ENCODE measurements at regions of chr12 and their contacts with region 1.

Region 1: DNA sequence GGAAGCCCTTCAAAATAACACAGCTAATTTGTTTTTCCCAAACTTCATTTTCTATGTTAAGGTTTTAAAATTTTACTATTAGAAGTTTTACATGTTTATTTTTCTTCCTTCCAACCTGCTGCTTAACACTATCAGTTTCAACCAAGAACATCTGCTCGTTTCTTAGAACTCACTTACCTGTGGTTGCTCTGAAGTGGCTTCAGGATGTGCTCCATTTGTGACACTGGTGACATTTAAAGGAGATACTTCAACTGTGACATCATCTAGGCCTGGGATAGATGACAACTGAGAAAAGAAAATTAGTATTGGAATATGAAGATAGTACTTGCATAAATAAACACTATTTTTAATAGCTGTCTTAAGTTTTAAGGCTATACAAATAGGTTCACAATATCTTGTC is 17.9 kb downstream of the WASHC3 start:
- DNase-seq: no peak
- ATAC-seq: no peak
- H3K4me3 Mint-ChIP-seq: no peak overlapping the region
- H3K27ac Mint-ChIP-seq: no peak overlapping the region
- H3K4me1 Mint-ChIP-seq: peaks cover 3% of the 10 kb centered on the region
- H3K27me3 Mint-ChIP-seq: no peaks in the 10 kb centered on the region
- CTCF ChIP-seq: no peak

Region 2: GRCh38 chr12:101877816-101878242 is 166.1 kb before region 1 on chr12:
- CTCF ChIA-PET with region 1: no interaction called
- POLR2A ChIA-PET with region 1: no interaction called
- intact Hi-C with region 1: no loop called
- DNase-seq: no peak
- ATAC-seq: peak; percentile 10
- H3K4me3 Mint-ChIP-seq: peak overlapping the region; percentile 90
- H3K27ac Mint-ChIP-seq: peak overlapping the region; percentile 65
- H3K4me1 Mint-ChIP-seq: peaks cover 19% of the 10 kb centered on the region
- H3K27me3 Mint-ChIP-seq: no peaks in the 10 kb centered on the region
- CTCF ChIP-seq: no peak

Region 3: DNA sequence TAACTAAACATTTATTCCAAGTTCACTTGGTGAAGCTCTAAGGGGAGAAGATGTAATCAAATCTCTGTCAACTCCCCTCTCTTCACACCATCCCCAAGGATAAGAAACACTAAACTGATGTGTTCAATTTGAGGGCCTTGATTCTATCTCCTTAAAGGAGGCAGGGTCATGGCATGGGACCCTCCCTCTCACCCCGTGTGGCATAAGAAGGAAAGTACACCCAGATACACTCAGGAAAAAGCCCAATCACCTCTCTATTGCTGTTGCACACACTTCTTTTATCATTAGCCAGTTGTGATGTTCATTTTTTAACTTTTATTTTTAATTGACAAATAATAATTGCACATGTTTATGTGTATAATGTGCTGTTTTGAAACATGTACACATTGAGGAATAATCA is 17.2 kb before region 1 on chr12:
- CTCF ChIA-PET with region 1: no interaction called
- POLR2A ChIA-PET with region 1: no interaction called
- intact Hi-C with region 1: loop called (anchors 2 kb)
- DNase-seq: no peak
- ATAC-seq: no peak
- H3K4me3 Mint-ChIP-seq: no peak overlapping the region
- H3K27ac Mint-ChIP-seq: no peak overlapping the region
- H3K4me1 Mint-ChIP-seq: no peaks in the 10 kb centered on the region
- H3K27me3 Mint-ChIP-seq: no peaks in the 10 kb centered on the region
- CTCF ChIP-seq: no peak

Region 4: DNA sequence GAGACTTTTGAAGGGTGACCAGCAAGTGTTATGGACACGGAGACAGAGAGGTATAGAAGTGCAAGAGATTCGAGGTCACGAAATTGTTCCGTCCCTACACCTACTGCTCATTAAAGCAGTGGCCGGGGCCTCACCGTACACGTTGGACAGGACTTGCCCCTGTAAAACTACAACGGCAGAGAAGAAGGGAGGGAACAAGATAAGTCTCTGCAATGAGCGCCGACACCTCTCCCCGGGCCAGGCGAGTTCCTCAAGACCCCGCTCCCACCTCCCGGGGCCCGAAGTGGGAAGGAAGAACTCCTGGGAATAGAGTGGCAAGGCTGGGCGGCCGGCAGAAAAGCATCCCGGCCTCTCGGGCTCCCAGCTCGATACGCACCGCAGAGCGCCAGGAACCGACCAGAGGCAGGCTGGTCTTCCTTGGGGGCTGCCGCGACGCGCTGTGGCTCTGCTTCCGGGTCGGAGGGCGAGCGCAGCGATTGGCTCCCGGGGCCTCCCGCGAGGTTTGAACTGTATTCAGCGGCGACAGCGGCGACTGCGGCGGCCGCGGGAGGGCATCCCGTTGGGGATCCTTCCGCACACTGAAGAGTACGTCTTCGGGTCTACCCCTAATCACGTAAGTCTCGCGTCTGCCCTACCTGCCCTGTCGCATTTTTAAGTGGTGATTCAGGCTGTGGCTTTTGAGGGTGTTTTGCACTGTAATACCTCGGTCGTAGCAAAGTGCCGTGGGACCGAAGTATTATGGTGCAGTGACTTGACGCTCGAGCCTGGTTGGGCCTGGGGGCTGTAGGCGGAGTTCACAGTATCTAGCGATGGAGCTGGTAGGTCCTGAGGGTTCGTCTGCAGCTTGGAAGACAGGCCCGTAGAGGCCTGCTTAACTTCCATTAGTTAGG is 76.0 kb after region 1 on chr12 and contains the starts of genes NUP37 and PARPBP:
- CTCF ChIA-PET with region 1: no interaction called
- POLR2A ChIA-PET with region 1: no interaction called
- intact Hi-C with region 1: no loop called
- DNase-seq: peak; percentile 90
- ATAC-seq: peak; percentile 98
- H3K4me3 Mint-ChIP-seq: peak within 1 kb of the TSS; percentile 95
- H3K27ac Mint-ChIP-seq: peak within 1 kb of the TSS; percentile 91
- H3K4me1 Mint-ChIP-seq: peaks cover 12% of the 10 kb centered on the region
- H3K27me3 Mint-ChIP-seq: no peaks in the 10 kb centered on the region
- CTCF ChIP-seq: no peak
- total RNA-seq, gene NUP37: 27.0 and 29.9 TPM in 2 replicates
- total RNA-seq, gene PARPBP: 4.6 and 5.0 TPM in 2 replicates

Measured in activated B cell treated with CpG ODN at 0.5 μM for 24 hours (primary cell).